Right lobe of liver (tissue), 6 donors: ENCODE measurements at regions of chr17 and their contacts with region 1.

Region 1: DNA sequence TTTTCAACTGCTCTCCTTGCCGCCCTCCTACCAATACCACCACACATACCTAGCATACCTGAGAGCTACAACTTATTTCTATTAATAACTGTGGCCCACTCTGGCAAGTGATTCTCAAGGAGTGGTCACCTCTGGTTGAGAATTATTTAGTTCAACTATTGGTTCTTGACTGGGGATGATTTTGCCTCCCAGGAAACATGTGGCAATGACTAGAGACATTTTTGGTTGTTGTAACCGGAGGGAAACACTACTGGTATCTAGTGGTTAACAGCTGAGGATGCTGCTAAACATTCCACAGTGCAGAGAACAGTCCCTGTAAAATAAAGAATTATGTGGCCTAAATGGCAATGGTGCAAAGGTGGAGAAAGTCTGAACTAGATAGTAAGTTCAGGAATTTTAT is 96.7 kb downstream of the TRIM37 start:
- DNase-seq: no peak
- ATAC-seq: no peak
- H3K4me3 ChIP-seq: no peak overlapping the region
- H3K27ac ChIP-seq: no peak overlapping the region
- H3K4me1 ChIP-seq: peaks cover 0 to 27% (median 8%) of the 10 kb centered on the region in 4 donors
- H3K27me3 ChIP-seq: no peaks in the 10 kb centered on the region
- CTCF ChIP-seq: no peak
- POLR2A ChIP-seq: no peak

Region 2: DNA sequence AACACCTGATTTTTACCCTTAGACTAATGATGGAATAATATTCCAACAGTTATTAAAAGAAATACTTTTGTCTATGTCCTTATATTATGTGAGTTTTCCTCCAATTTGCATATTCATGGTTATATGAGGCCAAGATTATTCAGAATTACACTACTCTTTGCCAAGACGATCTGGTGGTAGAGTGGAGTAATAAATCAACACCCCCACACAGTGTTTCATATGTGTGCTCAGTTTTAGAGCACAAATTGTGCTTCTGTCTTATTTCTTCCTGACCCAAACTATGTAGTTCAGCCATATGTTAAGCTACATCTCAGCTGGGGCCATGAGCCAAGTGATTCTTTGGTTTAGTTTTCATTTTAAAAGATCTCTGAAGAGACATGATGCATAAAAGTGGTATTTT is 281.2 kb before region 1 on chr17:
- intact Hi-C with region 1: loop called in 1 of 2 experiments (anchors 10 kb)
- DNase-seq: no peak
- ATAC-seq: no peak
- H3K4me3 ChIP-seq: no peak overlapping the region
- H3K27ac ChIP-seq: no peak overlapping the region
- H3K4me1 ChIP-seq: no peaks in the 10 kb centered on the region
- H3K27me3 ChIP-seq: no peaks in the 10 kb centered on the region
- CTCF ChIP-seq: no peak
- POLR2A ChIP-seq: no peak

Region 3: DNA sequence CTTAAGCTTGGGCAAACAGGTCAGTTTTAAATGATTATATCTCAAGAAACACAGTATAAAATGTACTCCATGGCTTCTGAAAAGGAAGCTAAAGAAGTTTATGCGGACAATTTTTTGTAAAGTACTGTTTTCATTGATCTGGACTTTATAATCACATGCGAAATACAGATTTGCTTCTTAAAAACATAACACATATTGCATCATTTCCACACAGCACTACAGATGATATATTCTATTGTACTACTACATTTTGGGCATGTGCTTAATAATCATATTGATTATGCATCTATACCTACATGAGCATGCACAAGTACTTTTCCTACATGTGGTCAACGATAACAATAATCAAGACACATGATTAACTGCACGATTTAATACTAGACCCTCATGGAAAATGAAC is 74.1 kb after region 1 on chr17:
- intact Hi-C with region 1: no loop called
- DNase-seq: no peak
- ATAC-seq: no peak
- H3K4me3 ChIP-seq: no peak overlapping the region
- H3K27ac ChIP-seq: no peak overlapping the region
- H3K4me1 ChIP-seq: no peaks in the 10 kb centered on the region
- H3K27me3 ChIP-seq: no peaks in the 10 kb centered on the region
- CTCF ChIP-seq: no peak
- POLR2A ChIP-seq: no peak